ENCODE measurements at regions of chr10 and their contacts with region 1.

Region 1: GRCh38 chr10:93376372-93377293 is 105.5 kb downstream of the MYOF start:
- DNase-seq: peak; percentile 88
- H3K4me3 Mint-ChIP-seq: peak overlapping the region; percentile 55
- H3K27ac Mint-ChIP-seq: peak overlapping the region; percentile 87
- H3K4me1 Mint-ChIP-seq: peaks cover 40% of the 10 kb centered on the region
- H3K27me3 Mint-ChIP-seq: no peaks in the 10 kb centered on the region
- CTCF ChIP-seq: peak; percentile 85

Region 2: GRCh38 chr10:93138113-93138870 is 238.3 kb before region 1 on chr10:
- CTCF ChIA-PET with region 1: no interaction called
- POLR2A ChIA-PET with region 1: no interaction called
- intact Hi-C with region 1: no loop called
- DNase-seq: peak; percentile 84
- H3K4me3 Mint-ChIP-seq: no peak overlapping the region
- H3K27ac Mint-ChIP-seq: peak overlapping the region; percentile 92
- H3K4me1 Mint-ChIP-seq: peaks cover 8% of the 10 kb centered on the region
- H3K27me3 Mint-ChIP-seq: no peaks in the 10 kb centered on the region
- CTCF ChIP-seq: no peak

Region 3: GRCh38 chr10:93363891-93364648 is 12.6 kb before region 1 on chr10:
- CTCF ChIA-PET with region 1: interaction called, 37 read pairs
- POLR2A ChIA-PET with region 1: interaction called, 6 read pairs
- intact Hi-C with region 1: no loop called
- DNase-seq: no peak
- H3K4me3 Mint-ChIP-seq: no peak overlapping the region
- H3K27ac Mint-ChIP-seq: no peak overlapping the region
- H3K4me1 Mint-ChIP-seq: no peaks in the 10 kb centered on the region
- H3K27me3 Mint-ChIP-seq: no peaks in the 10 kb centered on the region
- CTCF ChIP-seq: no peak

Region 4: GRCh38 chr10:93445097-93445960 is 68.7 kb after region 1 on chr10:
- CTCF ChIA-PET with region 1: interaction called, 102 read pairs
- POLR2A ChIA-PET with region 1: interaction called, 33 read pairs
- intact Hi-C with region 1: no loop called
- DNase-seq: peak; percentile 99
- H3K4me3 Mint-ChIP-seq: peak overlapping the region; percentile 38
- H3K27ac Mint-ChIP-seq: peak overlapping the region; percentile 99
- H3K4me1 Mint-ChIP-seq: peaks cover 53% of the 10 kb centered on the region
- H3K27me3 Mint-ChIP-seq: no peaks in the 10 kb centered on the region
- CTCF ChIP-seq: no peak

Region 5: GRCh38 chr10:93482145-93482834 is 105.7 kb after region 1 on chr10 and contains the start of gene MYOF:
- CTCF ChIA-PET with region 1: interaction called, 498 read pairs
- POLR2A ChIA-PET with region 1: interaction called, 371 read pairs
- intact Hi-C with region 1: loop called (anchors 1 kb)
- DNase-seq: peak; percentile 89
- H3K4me3 Mint-ChIP-seq: peak within 1 kb of the TSS; percentile 95
- H3K27ac Mint-ChIP-seq: peak within 1 kb of the TSS; percentile 89
- H3K4me1 Mint-ChIP-seq: peaks cover 21% of the 10 kb centered on the region
- H3K27me3 Mint-ChIP-seq: no peaks in the 10 kb centered on the region
- CTCF ChIP-seq: peak; percentile 45
- total RNA-seq, gene MYOF: 167 and 181 TPM in 2 replicates

Region 6: GRCh38 chr10:93509816-93510215 is 133.2 kb after region 1 on chr10:
- CTCF ChIA-PET with region 1: interaction called, 68 read pairs
- POLR2A ChIA-PET with region 1: interaction called, 5 read pairs
- intact Hi-C with region 1: loop called (anchors 1 kb)
- DNase-seq: no peak
- H3K4me3 Mint-ChIP-seq: no peak overlapping the region
- H3K27ac Mint-ChIP-seq: no peak overlapping the region
- H3K4me1 Mint-ChIP-seq: no peaks in the 10 kb centered on the region
- H3K27me3 Mint-ChIP-seq: no peaks in the 10 kb centered on the region
- CTCF ChIP-seq: no peak

Region 7: DNA sequence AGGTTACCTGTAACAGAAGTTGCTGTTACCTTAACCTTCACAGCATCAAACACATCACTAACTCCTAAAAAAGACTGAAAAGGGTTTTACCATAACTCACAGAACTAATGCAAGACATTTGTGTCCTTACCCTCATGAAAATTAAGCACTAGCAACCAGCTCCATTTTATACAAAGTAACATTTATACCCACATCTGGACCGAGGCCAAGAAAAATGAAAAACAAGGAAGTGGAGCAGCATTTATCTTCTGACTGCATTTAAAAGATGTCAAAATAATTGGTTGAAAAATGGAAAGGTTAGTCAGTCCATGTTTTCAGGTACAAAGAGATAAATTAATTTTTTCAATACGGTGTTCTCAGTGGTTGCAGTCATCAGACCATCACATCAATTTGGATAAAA is 227.5 kb after region 1 on chr10:
- CTCF ChIA-PET with region 1: no interaction called
- POLR2A ChIA-PET with region 1: no interaction called
- intact Hi-C with region 1: no loop called
- DNase-seq: peak; percentile 14
- H3K4me3 Mint-ChIP-seq: no peak overlapping the region
- H3K27ac Mint-ChIP-seq: no peak overlapping the region
- H3K4me1 Mint-ChIP-seq: peaks cover 5% of the 10 kb centered on the region
- H3K27me3 Mint-ChIP-seq: peaks cover 15% of the 10 kb centered on the region
- CTCF ChIP-seq: no peak